Sigmoid colon (tissue), 7 donors: ENCODE measurements at regions of chr10 and their contacts with region 1.

Region 1: DNA sequence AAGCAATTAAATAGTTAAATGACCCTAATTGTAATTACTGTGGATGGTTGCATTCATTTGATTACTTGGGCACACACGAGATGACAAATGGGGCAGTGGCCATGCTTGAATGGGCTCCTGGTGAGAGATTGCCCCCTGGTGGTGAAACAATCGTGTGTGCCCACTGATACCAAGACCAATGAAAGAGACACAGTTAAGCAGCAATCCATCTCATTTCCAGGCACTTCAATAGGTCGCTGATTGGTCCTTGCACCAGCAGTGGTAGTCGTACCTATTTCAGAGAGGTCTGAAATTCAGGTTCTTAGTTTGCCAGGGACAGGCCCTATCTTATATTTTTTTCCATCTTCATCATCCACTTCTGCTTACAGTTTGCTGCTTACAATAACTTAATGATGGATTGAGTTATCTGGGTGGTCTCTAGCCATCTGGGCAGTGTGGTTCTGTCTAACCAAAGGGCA is 8.3 kb downstream of the PCBD1 start:
- DNase-seq: peak; percentile 84
- H3K4me3 ChIP-seq: no peak overlapping the region
- H3K27ac ChIP-seq: no peak overlapping the region
- H3K4me1 ChIP-seq: no peaks in the 10 kb centered on the region
- H3K27me3 ChIP-seq: no peaks in the 10 kb centered on the region
- CTCF ChIP-seq: peak; percentile 75 to 95 (median 86)
- EP300 ChIP-seq: no peak
- POLR2A ChIP-seq: no peak

Region 2: DNA sequence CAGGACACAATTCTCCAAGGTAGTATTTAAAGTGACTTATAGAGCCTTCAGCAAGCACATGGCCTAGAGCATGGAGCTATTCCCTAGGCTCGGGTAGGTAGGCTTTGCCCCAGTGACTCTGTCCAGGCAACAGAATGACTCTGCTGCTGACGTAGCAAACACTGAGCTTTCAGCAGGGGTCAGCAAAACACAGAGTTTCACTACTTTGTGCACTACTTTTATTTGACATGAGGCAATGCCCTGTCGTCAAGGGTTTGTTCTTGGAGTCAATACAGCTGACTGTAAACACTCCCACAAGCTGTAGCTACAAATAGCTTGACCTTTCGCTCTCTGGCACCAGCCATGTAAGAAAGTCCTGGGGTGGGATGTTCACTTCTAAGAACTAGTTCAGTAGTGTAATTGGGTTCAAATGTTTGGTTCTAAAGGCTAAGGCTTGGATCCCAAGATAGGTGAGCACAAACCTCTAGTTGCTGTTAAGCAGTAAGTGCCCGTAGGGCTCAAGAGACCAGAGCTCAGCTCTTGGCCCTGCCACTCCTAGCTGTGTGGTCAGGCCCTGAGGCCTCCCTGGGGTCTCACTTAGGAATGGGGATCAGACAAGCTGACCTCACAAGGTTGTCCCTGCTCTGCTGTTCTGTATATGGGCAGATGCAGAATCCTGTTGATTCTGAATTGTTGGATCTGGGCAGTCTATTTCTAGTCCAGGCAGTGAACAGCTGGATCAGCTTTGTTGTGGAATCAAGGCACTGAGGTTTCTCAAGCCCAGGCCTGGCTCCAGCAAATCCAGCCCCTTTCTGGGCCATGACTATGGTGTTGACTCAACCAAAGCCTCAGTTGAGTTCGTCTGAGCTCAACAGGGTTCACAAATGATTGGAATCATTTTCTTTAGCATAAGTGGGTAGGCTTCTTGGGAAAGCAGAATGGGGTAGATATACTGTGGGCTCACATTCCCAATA is 449.3 kb before region 1 on chr10:
- intact Hi-C with region 1: no loop called
- DNase-seq: peak; percentile 92
- H3K4me3 ChIP-seq: no peak overlapping the region
- H3K27ac ChIP-seq: peak overlapping the region; percentile 79 to 85 (median 80)
- H3K4me1 ChIP-seq: peaks cover 0 to 63% (median 54%) of the 10 kb centered on the region in 4 donors
- H3K27me3 ChIP-seq: no peaks in the 10 kb centered on the region
- CTCF ChIP-seq: peak in 1 of 4 experiments; percentile 22
- EP300 ChIP-seq: peak; percentile 62 to 91 (median 84)
- POLR2A ChIP-seq: no peak

Region 3: GRCh38 chr10:70815504-70816219 is 64.4 kb before region 1 on chr10 and contains the start of gene SGPL1:
- intact Hi-C with region 1: loop called (anchors 1 kb)
- DNase-seq: peak; percentile 91
- H3K4me3 ChIP-seq: peak within 1 kb of the TSS; percentile 69 to 86 (median 84)
- H3K27ac ChIP-seq: peak within 1 kb of the TSS; percentile 94 to 97 (median 95)
- H3K4me1 ChIP-seq: peaks cover 0 to 18% (median 13%) of the 10 kb centered on the region in 4 donors
- H3K27me3 ChIP-seq: no peaks in the 10 kb centered on the region
- CTCF ChIP-seq: peak; percentile 57 to 98 (median 78)
- EP300 ChIP-seq: no peak
- POLR2A ChIP-seq: no peak
- total RNA-seq, gene SGPL1: 18.5 to 22.2 (median 20.2) TPM